ENCODE measurements at regions of chr2 and their contacts with region 1.

Region 1: GRCh38 chr2:73931531-73932500 is 5.1 kb downstream of the DGUOK start:
- DNase-seq: peak in 32 of 42 donors; percentile 16 to 82 (median 46)

Region 2: GRCh38 chr2:73700131-73700611 is 231.6 kb before region 1 on chr2:
- intact Hi-C with region 1: no loop called
- DNase-seq: peak in 4 of 42 donors; percentile 3 to 41 (median 10)

Region 3: GRCh38 chr2:73985308-73986084 is 53.7 kb after region 1 on chr2:
- intact Hi-C with region 1: loop called (anchors 5 kb)
- DNase-seq: peak in 9 of 42 donors; percentile 16 to 56 (median 41)

Measured in head of caudate nucleus (tissue), 42 donors.